ENCODE measurements at regions of chr9 and their contacts with region 1.

Region 1: GRCh38 chr9:120868676-120869359 is 8.2 kb downstream of the PHF19 start:
- DNase-seq: peak; percentile 96 to 98
- ATAC-seq: peak; percentile 97
- H3K4me3 ChIP-seq: peak overlapping the region; percentile 39
- H3K27ac ChIP-seq: peak overlapping the region; percentile 78 to 89
- H3K4me1 ChIP-seq: peaks cover 28% of the 10 kb centered on the region
- CTCF ChIP-seq: peak; percentile 51
- EP300 ChIP-seq: no peak
- POLR2A ChIP-seq: peak; percentile 48
- RAD21 ChIP-seq: peak; percentile 43 to 47; a peak in 3 of 5 replicates

Region 2: GRCh38 chr9:120792898-120793765 is 75.7 kb before region 1 on chr9 and contains the start of gene FBXW2:
- CTCF ChIA-PET with region 1: no interaction called
- POLR2A ChIA-PET with region 1: interaction called, 17 read pairs
- DNase-seq: peak; percentile 90 to 92
- ATAC-seq: peak; percentile 99
- H3K4me3 ChIP-seq: peak within 1 kb of the TSS; percentile 67
- H3K27ac ChIP-seq: peak within 1 kb of the TSS; percentile 89 to 97
- H3K4me1 ChIP-seq: peaks cover 16% of the 10 kb centered on the region
- CTCF ChIP-seq: no peak
- EP300 ChIP-seq: no peak
- POLR2A ChIP-seq: peak; percentile 96
- RAD21 ChIP-seq: no peak; a peak in 2 of 5 replicates
- polyA plus RNA-seq, gene FBXW2: 56.0 and 60.0 TPM in 2 replicates

Region 3: DNA sequence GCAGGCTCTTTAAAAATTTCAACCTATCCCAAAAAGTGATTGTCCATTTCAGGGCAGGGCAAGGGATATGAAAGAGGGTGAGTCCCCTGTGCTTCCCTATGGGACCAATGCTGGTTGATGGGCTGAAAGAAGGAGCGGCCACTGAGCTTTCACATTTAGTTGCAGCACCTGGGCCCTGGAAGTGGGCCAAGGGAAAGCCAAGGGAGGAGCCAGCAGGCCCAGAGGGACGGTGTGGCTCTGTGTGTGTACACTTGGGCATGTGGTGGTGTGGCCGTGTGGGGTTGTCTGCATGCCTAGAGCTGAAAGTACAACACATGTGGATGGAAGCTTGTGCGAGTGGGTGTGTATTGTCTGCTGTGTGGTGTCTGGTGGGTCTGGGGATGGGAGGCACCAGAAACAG is 12.1 kb before region 1 on chr9:
- CTCF ChIA-PET with region 1: interaction called, 13 read pairs
- POLR2A ChIA-PET with region 1: interaction called, 4 read pairs
- DNase-seq: no peak
- ATAC-seq: no peak
- H3K4me3 ChIP-seq: no peak overlapping the region
- H3K27ac ChIP-seq: no peak overlapping the region
- H3K4me1 ChIP-seq: no peaks in the 10 kb centered on the region
- CTCF ChIP-seq: no peak
- EP300 ChIP-seq: no peak
- POLR2A ChIP-seq: no peak
- RAD21 ChIP-seq: no peak

Region 4: GRCh38 chr9:120928483-120929228 is 59.8 kb after region 1 on chr9:
- CTCF ChIA-PET with region 1: interaction called, 12 read pairs
- POLR2A ChIA-PET with region 1: interaction called, 5 read pairs
- DNase-seq: peak; percentile 57 to 78
- ATAC-seq: peak; percentile 85 to 93
- H3K4me3 ChIP-seq: peak overlapping the region; percentile 77
- H3K27ac ChIP-seq: peak overlapping the region; percentile 89 to 97
- H3K4me1 ChIP-seq: peaks cover 26% of the 10 kb centered on the region
- CTCF ChIP-seq: no peak
- EP300 ChIP-seq: no peak
- POLR2A ChIP-seq: peak; percentile 73
- RAD21 ChIP-seq: 0 out of 5 replicates have a peak, but pooled peaks of 1 of the 2 experiments have one; percentile 10

Region 5: GRCh38 chr9:120936011-120936763 is 67.4 kb after region 1 on chr9:
- CTCF ChIA-PET with region 1: interaction called, 18 read pairs
- POLR2A ChIA-PET with region 1: no interaction called
- DNase-seq: peak; percentile 89 to 96
- ATAC-seq: peak; percentile 88 to 93
- H3K4me3 ChIP-seq: no peak overlapping the region
- H3K27ac ChIP-seq: peak overlapping the region; percentile 83 to 85
- H3K4me1 ChIP-seq: peaks cover 45% of the 10 kb centered on the region
- CTCF ChIP-seq: peak; percentile 95
- EP300 ChIP-seq: no peak
- POLR2A ChIP-seq: no peak
- RAD21 ChIP-seq: peak; percentile 89

Region 6: GRCh38 chr9:120942186-120943001 is 73.6 kb after region 1 on chr9:
- CTCF ChIA-PET with region 1: interaction called, 18 read pairs
- POLR2A ChIA-PET with region 1: no interaction called
- DNase-seq: peak in 1 of 2 experiments; percentile 45
- ATAC-seq: peak; percentile 31 to 49; a peak in 3 of 6 replicates
- H3K4me3 ChIP-seq: no peak overlapping the region
- H3K27ac ChIP-seq: peak overlapping the region; percentile 65 to 77
- H3K4me1 ChIP-seq: peaks cover 42% of the 10 kb centered on the region
- CTCF ChIP-seq: no peak
- EP300 ChIP-seq: no peak
- POLR2A ChIP-seq: no peak
- RAD21 ChIP-seq: no peak

Measured in A549 (cell line).